ENCODE measurements at regions of chr4 and their contacts with region 1.

Region 1: GRCh38 chr4:6327041-6327917 is 57.6 kb downstream of the WFS1 start:
- DNase-seq: no peak
- H3K4me3 ChIP-seq: no peak overlapping the region
- H3K27me3 ChIP-seq: peaks cover 4% of the 10 kb centered on the region; the same call in 1 of the 2 replicates
- CTCF ChIP-seq: peak; percentile 91

Region 2: DNA sequence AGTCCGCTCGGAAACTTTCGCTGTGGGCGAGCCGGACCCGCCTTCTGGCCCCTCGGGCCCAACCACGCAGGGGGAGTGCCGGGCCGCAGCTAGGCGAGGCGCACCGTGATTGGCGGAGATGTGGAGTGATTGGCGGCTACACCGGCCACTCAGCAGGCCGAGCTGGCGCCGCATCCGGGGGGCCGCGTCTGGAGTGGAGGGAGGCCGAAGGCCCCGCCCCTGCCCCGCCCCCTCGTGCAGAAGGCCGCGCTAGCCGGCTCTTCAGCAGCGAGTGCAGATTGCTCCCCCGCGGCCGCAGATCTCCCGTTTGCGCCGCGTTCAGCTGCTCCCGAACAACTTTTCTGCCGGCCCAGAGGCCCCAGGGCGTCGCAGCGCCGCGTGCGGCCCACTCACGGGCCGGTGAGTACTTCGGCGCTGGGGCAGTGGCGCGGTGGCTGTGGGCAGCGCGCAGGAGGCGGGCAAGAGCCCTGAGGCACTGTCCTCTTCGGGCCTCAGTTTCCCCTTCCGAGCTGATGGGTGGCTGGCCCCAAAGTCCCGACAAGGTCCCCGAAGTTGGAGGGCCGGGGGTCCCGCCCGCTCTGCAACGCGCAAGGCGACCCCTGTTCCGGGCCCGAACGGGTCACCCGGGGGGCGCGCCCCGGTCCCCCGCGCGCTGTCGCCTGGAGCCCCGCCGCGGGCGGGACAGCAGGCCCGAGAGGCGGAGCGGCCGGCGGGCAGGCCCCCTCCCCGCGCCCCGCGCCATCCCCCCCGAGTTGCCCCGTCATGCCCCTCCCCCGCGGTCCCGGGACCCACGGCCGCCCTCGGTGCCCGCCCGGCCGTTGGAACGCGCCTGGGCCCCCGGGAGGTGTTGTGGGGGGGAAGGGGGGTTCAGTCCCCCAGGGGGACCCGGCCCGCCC is 57.4 kb before region 1 on chr4 and contains the start of gene WFS1:
- CTCF ChIA-PET with region 1: interaction called, 383 read pairs
- POLR2A ChIA-PET with region 1: no interaction called
- DNase-seq: peak; percentile 81
- H3K4me3 ChIP-seq: peak within 1 kb of the TSS; percentile 92
- H3K27me3 ChIP-seq: no peaks in the 10 kb centered on the region
- CTCF ChIP-seq: no peak
- polyA plus RNA-seq, gene WFS1: 40.3 and 66.4 TPM in 2 replicates

Region 3: GRCh38 chr4:6308899-6309643 is 18.2 kb before region 1 on chr4:
- CTCF ChIA-PET with region 1: interaction called, 10 read pairs
- POLR2A ChIA-PET with region 1: no interaction called
- DNase-seq: no peak
- H3K4me3 ChIP-seq: no peak overlapping the region; the same call in none of the 2 replicates
- H3K27me3 ChIP-seq: peaks cover 10% of the 10 kb centered on the region
- CTCF ChIP-seq: no peak

Region 4: GRCh38 chr4:6338175-6338950 is 11.1 kb after region 1 on chr4:
- CTCF ChIA-PET with region 1: interaction called, 51 read pairs
- POLR2A ChIA-PET with region 1: no interaction called
- DNase-seq: no peak
- H3K4me3 ChIP-seq: no peak overlapping the region
- H3K27me3 ChIP-seq: 0 out of 2 replicates have a peak, but pooled peaks cover 3% of the 10 kb centered on the region
- CTCF ChIP-seq: no peak

Region 5: GRCh38 chr4:6343950-6344408 is 16.7 kb after region 1 on chr4:
- CTCF ChIA-PET with region 1: interaction called, 51 read pairs
- POLR2A ChIA-PET with region 1: no interaction called
- DNase-seq: no peak
- H3K4me3 ChIP-seq: no peak overlapping the region
- H3K27me3 ChIP-seq: 0 out of 2 replicates have a peak, but pooled peaks cover 3% of the 10 kb centered on the region
- CTCF ChIP-seq: no peak

Region 6: DNA sequence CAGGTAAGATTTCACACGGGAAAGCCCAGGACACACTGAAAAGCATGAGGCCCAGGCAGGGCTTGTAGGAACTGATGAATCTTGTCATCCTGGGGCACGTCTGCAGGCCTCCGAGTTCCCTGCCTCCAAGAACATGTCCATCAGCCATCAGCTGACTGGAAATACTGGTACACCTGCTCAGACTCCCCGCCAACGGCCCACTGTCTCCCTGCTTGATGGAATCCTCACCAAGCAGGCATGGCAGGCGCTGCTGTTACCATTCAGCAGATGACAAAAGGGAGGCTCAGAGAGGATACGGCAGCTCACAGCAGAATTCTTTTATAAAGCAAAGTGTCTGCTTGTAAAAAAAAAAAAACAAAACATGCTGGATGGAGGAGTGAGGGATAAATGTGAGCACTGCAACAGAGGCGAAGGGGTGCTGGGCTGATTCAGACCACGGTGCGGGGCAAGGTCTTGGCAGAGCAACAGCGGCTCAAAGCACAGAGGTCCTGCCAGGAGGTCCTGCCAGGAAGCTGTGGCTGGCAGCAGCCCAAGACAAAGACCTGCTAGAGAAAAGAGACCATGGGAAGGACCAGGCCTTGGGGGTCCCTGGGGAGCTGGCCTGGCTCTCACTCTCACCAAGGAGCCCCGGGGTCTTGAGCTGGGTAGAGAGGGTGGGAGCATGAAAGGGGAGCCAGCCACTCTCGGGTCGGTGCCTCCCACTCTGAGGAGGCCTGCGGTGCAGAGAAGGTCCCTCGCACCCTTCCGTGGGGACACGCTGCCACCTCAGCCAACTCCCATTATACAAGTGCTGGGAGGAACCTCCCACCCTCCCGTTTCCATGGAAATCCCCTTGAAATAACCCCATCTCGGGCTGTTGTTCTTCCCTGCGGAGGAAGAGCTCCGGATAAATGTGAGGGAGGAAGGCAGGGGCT is 119.5 kb after region 1 on chr4:
- CTCF ChIA-PET with region 1: no interaction called
- POLR2A ChIA-PET with region 1: no interaction called
- DNase-seq: no peak
- H3K4me3 ChIP-seq: no peak overlapping the region
- H3K27me3 ChIP-seq: peaks cover 5% of the 10 kb centered on the region; the same call in 1 of the 2 replicates
- CTCF ChIP-seq: no peak

Measured in BJ (cell line).